ENCODE measurements at regions of chr11 and their contacts with region 1.

Region 1: DNA sequence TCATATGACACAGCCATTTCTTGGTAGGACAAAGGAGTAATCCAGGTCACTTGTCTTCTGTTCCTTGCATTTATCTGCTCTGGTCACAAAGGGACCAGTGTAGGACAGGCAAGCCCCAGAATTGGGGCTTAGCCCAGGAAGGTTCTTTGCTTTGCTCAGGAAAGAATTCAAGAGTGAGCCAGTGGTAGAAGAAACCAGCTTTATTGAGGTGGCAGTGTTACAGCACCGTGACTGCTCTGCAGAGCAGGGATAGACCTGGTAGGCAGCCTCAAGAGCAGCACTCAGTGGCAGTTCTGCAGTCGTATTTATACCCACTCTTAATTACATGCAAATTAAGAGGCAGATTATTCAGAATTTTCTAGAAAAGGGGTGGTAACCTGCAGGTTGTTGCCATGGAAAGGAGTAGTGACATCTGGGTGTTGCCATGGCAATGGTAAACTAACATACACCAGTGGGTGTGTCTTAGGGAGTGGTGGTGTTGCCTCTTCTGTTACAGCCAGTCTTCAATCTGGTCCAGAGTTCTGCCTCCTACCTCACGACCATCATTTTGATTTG is 84.9 kb upstream of the RAB1B start:
- DNase-seq: no peak
- ATAC-seq: peak; percentile 70
- H3K4me3 ChIP-seq: no peak overlapping the region
- H3K27ac ChIP-seq: no peak overlapping the region
- H3K4me1 ChIP-seq: peaks cover 7% of the 10 kb centered on the region; the same call in 1 of the 2 replicates
- H3K27me3 ChIP-seq: no peaks in the 10 kb centered on the region
- CTCF ChIP-seq: no peak

Region 2: DNA sequence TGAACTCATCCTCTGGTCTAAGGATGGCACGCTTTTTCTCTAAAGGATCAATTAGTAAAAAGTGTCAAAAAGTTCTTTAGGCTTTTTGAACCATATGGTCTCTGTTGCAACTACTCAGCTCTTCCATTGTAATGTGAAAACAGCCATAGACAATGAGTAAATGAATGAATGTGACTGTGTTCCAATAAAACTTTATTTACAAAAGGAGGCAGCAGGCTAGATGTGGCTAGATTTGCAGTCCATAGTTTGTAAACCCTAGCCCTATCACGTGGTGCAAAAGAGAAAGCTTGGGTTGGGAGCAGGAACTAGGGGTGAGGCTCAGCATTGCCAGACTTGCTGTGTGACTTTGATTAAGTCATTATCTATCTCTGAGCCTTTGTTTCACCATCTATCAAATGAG is 231.9 kb after region 1 on chr11:
- CTCF ChIA-PET with region 1: interaction called, 20 read pairs
- POLR2A ChIA-PET with region 1: no interaction called
- in situ Hi-C with region 1: no loop called
- intact Hi-C with region 1: no loop called
- DNase-seq: no peak
- ATAC-seq: no peak
- H3K4me3 ChIP-seq: no peak overlapping the region
- H3K27ac ChIP-seq: no peak overlapping the region
- H3K4me1 ChIP-seq: 0 out of 2 replicates have a peak, but pooled peaks cover 4% of the 10 kb centered on the region
- H3K27me3 ChIP-seq: peaks cover 22% of the 10 kb centered on the region
- CTCF ChIP-seq: no peak

Measured in Panc1 (cell line).